Transverse colon (tissue), 4 donors: ENCODE measurements at regions of chr5 and their contacts with region 1.

Region 1: DNA sequence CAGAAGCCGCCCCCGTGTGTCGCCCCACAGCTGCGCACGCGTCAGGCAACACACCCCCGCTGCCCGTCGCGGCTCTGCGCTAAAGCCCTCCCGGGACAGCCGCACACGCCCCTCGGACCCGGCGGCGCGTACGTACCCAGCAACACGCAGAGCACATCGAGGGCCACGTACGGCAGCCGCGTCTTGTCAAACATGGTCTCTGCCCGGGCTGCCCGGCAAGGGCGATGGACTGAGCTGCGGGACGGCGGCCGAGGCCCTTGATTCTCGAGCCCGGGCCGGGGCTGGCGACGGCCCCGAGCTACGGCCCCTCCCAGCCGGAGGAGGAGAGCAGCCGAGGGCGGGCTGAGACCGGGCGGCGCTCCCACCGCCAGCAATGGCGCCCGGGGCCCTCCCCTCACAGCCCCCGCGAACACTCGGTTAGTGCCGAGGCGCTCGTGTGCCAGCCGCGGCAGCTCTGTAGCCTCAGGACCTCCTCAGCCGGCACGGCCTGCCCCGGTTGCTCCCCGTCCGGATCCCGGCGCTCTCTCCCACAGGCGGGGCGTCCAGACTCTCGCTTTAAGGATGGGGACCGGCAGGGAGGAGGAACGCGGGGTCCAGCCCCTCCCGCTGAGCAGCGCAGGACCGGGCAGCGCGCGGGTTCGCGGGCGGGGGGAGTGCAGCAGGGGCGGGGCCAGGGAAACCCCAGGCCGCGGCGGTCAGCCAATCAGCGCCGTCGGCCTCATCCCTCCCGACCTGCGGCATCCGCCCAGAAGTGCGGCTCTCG is at the start of gene PLPP1:
- DNase-seq: peak; percentile 94
- H3K4me3 ChIP-seq: peak within 1 kb of the TSS; percentile 72 to 97 (median 86)
- H3K27ac ChIP-seq: peak within 1 kb of the TSS; percentile 93 to 99 (median 95)
- H3K4me1 ChIP-seq: peaks cover 0 to 21% (median 12%) of the 10 kb centered on the region in 4 donors
- H3K27me3 ChIP-seq: no peaks in the 10 kb centered on the region
- CTCF ChIP-seq: no peak
- EP300 ChIP-seq: no peak
- POLR2A ChIP-seq: peak; percentile 81
- total RNA-seq, gene PLPP1: 222 to 335 (median 288) TPM

Region 2: DNA sequence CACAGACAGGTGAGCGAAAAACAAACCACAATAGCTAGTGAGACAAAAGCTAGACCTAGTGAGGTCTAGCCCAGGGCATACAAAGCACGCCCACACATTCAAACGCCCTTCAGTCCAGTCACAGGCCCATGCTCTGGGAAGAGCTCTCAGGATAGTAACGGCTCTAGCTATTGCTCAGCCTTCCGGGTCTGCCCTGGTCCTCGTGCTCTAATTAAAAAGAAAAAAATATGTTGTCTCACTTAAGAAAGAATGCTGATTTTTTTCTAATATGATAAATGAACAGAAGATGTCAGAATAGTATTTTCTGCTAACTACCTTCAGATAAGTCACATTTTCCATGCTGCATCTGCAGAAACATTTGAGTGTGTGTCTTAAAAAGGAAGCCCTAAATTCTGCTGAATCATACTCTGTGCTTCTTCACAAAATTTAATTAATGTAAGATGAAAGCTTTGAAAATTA is 94.4 kb before region 1 on chr5:
- in situ Hi-C with region 1: no loop called
- intact Hi-C with region 1: loop called (anchors 2 kb)
- DNase-seq: no peak
- H3K4me3 ChIP-seq: no peak overlapping the region
- H3K27ac ChIP-seq: peak overlapping the region; percentile 82 to 88 (median 83)
- H3K4me1 ChIP-seq: peaks cover 14 to 61% (median 43%) of the 10 kb centered on the region in 4 donors
- H3K27me3 ChIP-seq: no peaks in the 10 kb centered on the region
- CTCF ChIP-seq: no peak
- EP300 ChIP-seq: no peak
- POLR2A ChIP-seq: no peak

Region 3: GRCh38 chr5:55601204-55601618 is 66.6 kb after region 1 on chr5:
- in situ Hi-C with region 1: no loop called
- intact Hi-C with region 1: loop called (anchors 10 kb)
- DNase-seq: peak; percentile 85
- H3K4me3 ChIP-seq: no peak overlapping the region
- H3K27ac ChIP-seq: peak overlapping the region; percentile 92 to 94 (median 93)
- H3K4me1 ChIP-seq: peaks cover 39 to 64% (median 53%) of the 10 kb centered on the region in 4 donors
- H3K27me3 ChIP-seq: no peaks in the 10 kb centered on the region
- CTCF ChIP-seq: no peak
- EP300 ChIP-seq: no peak
- POLR2A ChIP-seq: peak; percentile 12

Region 4: DNA sequence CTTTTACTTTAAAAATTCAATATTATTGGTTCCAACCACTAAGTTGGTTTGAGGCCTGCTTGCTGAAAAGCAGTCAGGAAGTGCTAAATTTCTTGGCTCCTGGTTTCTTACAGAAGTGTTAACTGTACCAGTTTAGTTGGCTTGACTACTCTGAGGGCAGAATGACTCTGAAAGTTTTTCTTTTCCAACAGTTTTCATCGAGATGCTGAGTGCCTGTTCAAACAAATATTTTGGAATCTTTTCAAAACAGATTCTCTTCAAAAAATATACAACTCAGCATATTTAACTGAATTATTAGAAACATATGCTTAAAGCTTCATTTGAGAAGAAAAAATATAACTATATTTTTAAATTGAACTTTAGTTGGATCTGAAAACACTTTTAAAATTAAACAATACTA is 140.5 kb after region 1 on chr5:
- in situ Hi-C with region 1: loop called in 1 of 4 experiments (anchors 10 kb)
- intact Hi-C with region 1: loop called (anchors 10 kb)
- DNase-seq: no peak
- H3K4me3 ChIP-seq: no peak overlapping the region
- H3K27ac ChIP-seq: peak overlapping the region in 2 of 4 donors; percentile 26 to 45
- H3K4me1 ChIP-seq: peaks cover 0 to 12% (median 2%) of the 10 kb centered on the region in 4 donors
- H3K27me3 ChIP-seq: no peaks in the 10 kb centered on the region
- CTCF ChIP-seq: no peak
- EP300 ChIP-seq: no peak
- POLR2A ChIP-seq: no peak

Region 5: DNA sequence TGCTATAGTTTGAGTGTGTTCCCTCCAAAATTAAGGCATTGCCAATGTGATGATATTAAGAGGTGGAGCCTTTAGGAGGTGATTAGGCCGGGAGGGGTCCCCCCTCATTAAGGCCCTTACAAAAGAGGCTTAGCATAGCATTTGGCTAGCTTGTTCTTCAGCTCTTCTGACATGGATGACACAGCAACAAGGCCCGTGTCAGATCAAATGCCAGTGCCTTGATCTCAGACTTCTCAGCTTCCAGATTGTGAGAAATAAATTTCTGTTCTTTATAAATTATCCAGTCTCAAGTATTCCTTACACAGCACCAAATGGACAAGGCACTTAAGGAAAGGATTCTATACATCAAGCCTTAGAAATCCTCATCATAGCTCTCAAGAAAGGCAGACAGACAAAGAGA is 145.7 kb after region 1 on chr5:
- in situ Hi-C with region 1: loop called in 1 of 4 experiments (anchors 10 kb)
- intact Hi-C with region 1: loop called (anchors 10 kb)
- DNase-seq: no peak
- H3K4me3 ChIP-seq: no peak overlapping the region
- H3K27ac ChIP-seq: peak overlapping the region in 1 of 4 donors; percentile 18
- H3K4me1 ChIP-seq: peaks cover 0 to 10% (median 3%) of the 10 kb centered on the region in 4 donors
- H3K27me3 ChIP-seq: no peaks in the 10 kb centered on the region
- CTCF ChIP-seq: no peak
- EP300 ChIP-seq: no peak
- POLR2A ChIP-seq: no peak

Region 6: DNA sequence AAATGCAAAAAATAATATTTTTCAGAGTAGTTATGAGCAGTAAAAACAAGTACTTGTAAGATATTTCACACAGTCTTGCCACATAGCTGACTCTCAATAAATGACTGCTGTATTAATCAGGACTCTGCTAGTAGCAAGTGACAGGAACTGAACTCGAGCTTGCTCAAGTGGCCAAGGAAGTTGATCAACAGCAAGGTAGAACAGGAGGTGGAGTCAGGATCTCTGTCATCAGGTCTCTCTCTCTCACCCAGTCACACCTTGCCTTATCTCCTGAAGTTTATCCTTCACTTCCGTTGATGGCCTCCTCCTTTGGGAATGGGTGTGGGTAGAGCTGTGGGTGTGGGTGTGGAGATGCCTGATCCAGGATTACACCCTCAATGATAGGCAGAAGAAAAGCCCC is 1746.2 kb after region 1 on chr5:
- in situ Hi-C with region 1: no loop called
- intact Hi-C with region 1: no loop called
- DNase-seq: no peak
- H3K4me3 ChIP-seq: no peak overlapping the region
- H3K27ac ChIP-seq: no peak overlapping the region
- H3K4me1 ChIP-seq: no peaks in the 10 kb centered on the region
- H3K27me3 ChIP-seq: no peaks in the 10 kb centered on the region
- CTCF ChIP-seq: no peak
- EP300 ChIP-seq: no peak
- POLR2A ChIP-seq: no peak